ENCODE measurements at regions of chr3 and their contacts with region 1.

Region 1: DNA sequence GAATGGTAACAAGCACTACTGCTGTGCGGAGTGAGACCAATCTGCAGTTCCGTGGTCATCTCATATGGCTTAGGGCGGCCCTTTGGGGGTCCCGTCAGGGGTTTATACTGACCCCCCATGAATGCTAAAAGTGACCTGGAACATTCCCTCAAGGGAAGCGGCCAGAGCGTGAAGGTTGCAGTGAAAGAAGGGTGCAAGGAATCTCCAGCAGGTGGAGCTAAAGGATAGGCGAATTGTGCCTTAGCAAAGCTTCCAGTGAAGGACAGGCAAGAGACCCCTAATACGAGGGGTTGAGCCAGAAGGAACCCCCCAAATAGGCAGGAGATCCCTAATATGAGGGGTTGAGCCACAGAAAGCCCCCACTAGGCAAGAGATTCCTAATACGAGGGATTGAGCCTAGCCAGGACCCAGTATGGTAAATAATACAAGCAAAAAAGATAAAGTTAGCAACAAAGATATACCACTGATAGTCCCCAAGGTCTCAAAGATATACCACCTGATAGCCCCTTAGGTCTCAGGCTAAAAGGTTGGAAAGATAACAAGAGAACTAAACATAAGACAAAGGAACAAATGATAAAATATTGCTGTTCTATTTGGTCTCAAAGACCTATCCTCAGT is 32.8 kb downstream of the ZNF589 start:
- DNase-seq: peak; percentile 76
- H3K4me3 ChIP-seq: no peak overlapping the region
- H3K27ac ChIP-seq: no peak overlapping the region
- H3K4me1 ChIP-seq: no peaks in the 10 kb centered on the region
- H3K27me3 ChIP-seq: no peaks in the 10 kb centered on the region
- CTCF ChIP-seq: peak; percentile 64 to 73
- POLR2A ChIP-seq: no peak

Region 2: GRCh38 chr3:48232734-48233133 is 41.0 kb before region 1 on chr3:
- CTCF ChIA-PET with region 1: interaction called, 6 read pairs
- POLR2A ChIA-PET with region 1: no interaction called
- dilution Hi-C with region 1: no loop called
- intact Hi-C with region 1: loop called (anchors 2 kb)
- DNase-seq: peak; percentile 69
- H3K4me3 ChIP-seq: no peak overlapping the region
- H3K27ac ChIP-seq: no peak overlapping the region
- H3K4me1 ChIP-seq: peaks cover 3% of the 10 kb centered on the region
- H3K27me3 ChIP-seq: no peaks in the 10 kb centered on the region
- CTCF ChIP-seq: peak; percentile 63 to 64
- POLR2A ChIP-seq: no peak

Region 3: GRCh38 chr3:48247401-48247811 is 26.3 kb before region 1 on chr3:
- CTCF ChIA-PET with region 1: interaction called, 10 read pairs
- POLR2A ChIA-PET with region 1: no interaction called
- dilution Hi-C with region 1: no loop called
- intact Hi-C with region 1: no loop called
- DNase-seq: peak; percentile 74
- H3K4me3 ChIP-seq: no peak overlapping the region
- H3K27ac ChIP-seq: peak overlapping the region; percentile 92
- H3K4me1 ChIP-seq: peaks cover 22% of the 10 kb centered on the region
- H3K27me3 ChIP-seq: no peaks in the 10 kb centered on the region
- CTCF ChIP-seq: no peak
- POLR2A ChIP-seq: no peak

Region 4: DNA sequence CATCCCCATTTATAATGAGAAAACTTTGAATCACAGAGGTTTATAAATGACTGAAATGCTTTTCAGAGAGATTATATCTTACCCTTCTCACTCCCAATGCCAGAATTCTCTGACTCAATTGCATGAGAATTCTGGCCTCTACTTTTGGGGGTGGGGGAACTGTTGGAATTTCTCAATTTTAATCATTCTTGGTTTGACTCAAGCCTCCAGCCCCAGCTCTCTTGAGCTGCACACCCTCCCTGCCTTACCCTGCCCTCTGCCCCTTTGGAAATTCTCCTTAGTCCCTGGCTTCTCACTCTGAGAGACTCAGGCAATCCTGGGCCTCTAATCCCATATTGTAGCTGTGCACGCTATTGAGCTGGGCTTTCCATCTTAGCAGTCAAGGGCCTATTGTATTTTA is 11.4 kb after region 1 on chr3:
- CTCF ChIA-PET with region 1: interaction called, 12 read pairs
- POLR2A ChIA-PET with region 1: no interaction called
- dilution Hi-C with region 1: no loop called
- intact Hi-C with region 1: no loop called
- DNase-seq: no peak
- H3K4me3 ChIP-seq: no peak overlapping the region
- H3K27ac ChIP-seq: no peak overlapping the region
- H3K4me1 ChIP-seq: no peaks in the 10 kb centered on the region
- H3K27me3 ChIP-seq: no peaks in the 10 kb centered on the region
- CTCF ChIP-seq: no peak
- POLR2A ChIP-seq: no peak

Measured in endothelial cell of umbilical vein (primary cell).